ENCODE measurements at regions of chr1 and their contacts with region 1.

Region 1: GRCh38 chr1:227343727-227344551 is 25.6 kb upstream of the CDC42BPA start:
- DNase-seq: no peak
- ATAC-seq: peak; percentile 56
- H3K4me3 ChIP-seq: no peak overlapping the region
- H3K27ac ChIP-seq: peak overlapping the region; percentile 9; the same call in 1 of the 3 replicates
- H3K4me1 ChIP-seq: peaks cover 0 to 7% of the 10 kb centered on the region in 2 experiments; a peak in 2 of 5 replicates
- H3K27me3 ChIP-seq: no peaks in the 10 kb centered on the region
- CTCF ChIP-seq: no peak
- EP300 ChIP-seq: no peak
- POLR2A ChIP-seq: no peak
- RAD21 ChIP-seq: no peak

Region 2: GRCh38 chr1:227330684-227331083 is 13.3 kb before region 1 on chr1:
- CTCF ChIA-PET with region 1: no interaction called
- POLR2A ChIA-PET with region 1: interaction called, 23 read pairs
- in situ Hi-C with region 1: no loop called
- intact Hi-C with region 1: no loop called
- DNase-seq: no peak
- ATAC-seq: no peak
- H3K4me3 ChIP-seq: no peak overlapping the region
- H3K27ac ChIP-seq: no peak overlapping the region
- H3K4me1 ChIP-seq: peaks cover 4 to 16% of the 10 kb centered on the region in 2 experiments
- H3K27me3 ChIP-seq: no peaks in the 10 kb centered on the region
- CTCF ChIP-seq: no peak
- EP300 ChIP-seq: no peak
- POLR2A ChIP-seq: no peak
- RAD21 ChIP-seq: no peak